A549 (cell line): ENCODE measurements at regions of chr1 and their contacts with region 1.

Region 1: GRCh38 chr1:26677306-26678115 is 18.3 kb upstream of the ARID1A start:
- DNase-seq: peak; percentile 81 to 92
- ATAC-seq: peak; percentile 100
- H3K4me3 ChIP-seq: no peak overlapping the region
- H3K27ac ChIP-seq: peak overlapping the region; percentile 53 to 66
- H3K4me1 ChIP-seq: peaks cover 9% of the 10 kb centered on the region; the same call in 2 of the 3 replicates
- CTCF ChIP-seq: peak; percentile 75
- EP300 ChIP-seq: no peak
- POLR2A ChIP-seq: no peak
- RAD21 ChIP-seq: peak in 1 of 2 experiments; percentile 73

Region 2: GRCh38 chr1:26574719-26575251 is 102.7 kb before region 1 on chr1:
- CTCF ChIA-PET with region 1: no interaction called
- POLR2A ChIA-PET with region 1: no interaction called
- DNase-seq: no peak
- ATAC-seq: no peak
- H3K4me3 ChIP-seq: no peak overlapping the region
- H3K27ac ChIP-seq: no peak overlapping the region
- H3K4me1 ChIP-seq: no peaks in the 10 kb centered on the region
- CTCF ChIP-seq: no peak
- EP300 ChIP-seq: no peak
- POLR2A ChIP-seq: no peak
- RAD21 ChIP-seq: no peak

Region 3: GRCh38 chr1:26608895-26609294 is 68.6 kb before region 1 on chr1:
- CTCF ChIA-PET with region 1: interaction called, 39 read pairs
- POLR2A ChIA-PET with region 1: no interaction called
- DNase-seq: no peak
- ATAC-seq: no peak
- H3K4me3 ChIP-seq: no peak overlapping the region
- H3K27ac ChIP-seq: no peak overlapping the region
- H3K4me1 ChIP-seq: no peaks in the 10 kb centered on the region
- CTCF ChIP-seq: no peak
- EP300 ChIP-seq: no peak
- POLR2A ChIP-seq: no peak
- RAD21 ChIP-seq: no peak

Region 4: GRCh38 chr1:26666855-26667254 is 10.7 kb before region 1 on chr1:
- CTCF ChIA-PET with region 1: interaction called, 19 read pairs
- POLR2A ChIA-PET with region 1: no interaction called
- DNase-seq: no peak
- ATAC-seq: no peak
- H3K4me3 ChIP-seq: no peak overlapping the region
- H3K27ac ChIP-seq: no peak overlapping the region
- H3K4me1 ChIP-seq: no peaks in the 10 kb centered on the region
- CTCF ChIP-seq: no peak
- EP300 ChIP-seq: no peak
- POLR2A ChIP-seq: no peak
- RAD21 ChIP-seq: no peak

Region 5: DNA sequence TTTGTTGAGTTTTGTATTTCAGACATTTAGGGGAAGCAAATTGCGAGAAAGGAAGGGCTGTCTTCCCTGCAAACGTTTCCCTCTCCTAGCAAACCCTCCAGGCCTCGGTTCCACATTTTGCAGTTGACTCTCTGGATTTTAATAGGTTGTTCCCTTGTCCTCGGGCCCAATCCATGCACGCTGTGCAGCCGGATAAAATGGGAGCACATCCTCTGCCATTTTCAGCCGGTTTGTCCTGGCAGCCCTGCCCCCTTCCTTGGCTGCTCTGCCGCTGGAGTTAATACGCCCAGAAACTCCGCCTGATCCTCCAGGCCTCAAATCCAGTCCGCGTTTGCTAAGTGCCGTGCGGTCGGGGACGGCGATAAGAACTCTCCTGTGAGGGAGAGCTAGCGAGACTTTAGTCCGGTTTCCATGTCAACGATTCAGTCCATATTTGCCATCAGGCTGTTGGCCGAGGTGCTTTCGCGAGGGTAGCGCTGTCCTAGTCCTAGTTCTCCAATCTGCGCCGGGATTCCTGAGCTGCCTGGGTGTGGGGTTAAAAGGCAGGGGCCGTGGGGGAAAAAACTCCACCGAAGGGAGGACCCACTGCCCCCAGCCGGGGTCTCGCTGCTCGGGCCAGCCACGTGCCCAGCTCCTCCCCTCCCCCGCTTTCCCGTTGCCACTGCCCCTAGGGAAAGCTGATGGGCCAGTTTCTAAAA is 15.4 kb after region 1 on chr1:
- CTCF ChIA-PET with region 1: interaction called, 51 read pairs
- POLR2A ChIA-PET with region 1: interaction called, 14 read pairs
- DNase-seq: peak; percentile 90 to 98
- ATAC-seq: peak; percentile 77 to 78
- H3K4me3 ChIP-seq: peak overlapping the region; percentile 47
- H3K27ac ChIP-seq: peak overlapping the region; percentile 100
- H3K4me1 ChIP-seq: peaks cover 24% of the 10 kb centered on the region
- CTCF ChIP-seq: no peak
- EP300 ChIP-seq: no peak; a peak in 1 of 5 replicates
- POLR2A ChIP-seq: peak; percentile 41; the same call in 1 of the 2 replicates
- RAD21 ChIP-seq: 0 out of 5 replicates have a peak, but pooled peaks have one; percentile 8 to 14

Region 6: DNA sequence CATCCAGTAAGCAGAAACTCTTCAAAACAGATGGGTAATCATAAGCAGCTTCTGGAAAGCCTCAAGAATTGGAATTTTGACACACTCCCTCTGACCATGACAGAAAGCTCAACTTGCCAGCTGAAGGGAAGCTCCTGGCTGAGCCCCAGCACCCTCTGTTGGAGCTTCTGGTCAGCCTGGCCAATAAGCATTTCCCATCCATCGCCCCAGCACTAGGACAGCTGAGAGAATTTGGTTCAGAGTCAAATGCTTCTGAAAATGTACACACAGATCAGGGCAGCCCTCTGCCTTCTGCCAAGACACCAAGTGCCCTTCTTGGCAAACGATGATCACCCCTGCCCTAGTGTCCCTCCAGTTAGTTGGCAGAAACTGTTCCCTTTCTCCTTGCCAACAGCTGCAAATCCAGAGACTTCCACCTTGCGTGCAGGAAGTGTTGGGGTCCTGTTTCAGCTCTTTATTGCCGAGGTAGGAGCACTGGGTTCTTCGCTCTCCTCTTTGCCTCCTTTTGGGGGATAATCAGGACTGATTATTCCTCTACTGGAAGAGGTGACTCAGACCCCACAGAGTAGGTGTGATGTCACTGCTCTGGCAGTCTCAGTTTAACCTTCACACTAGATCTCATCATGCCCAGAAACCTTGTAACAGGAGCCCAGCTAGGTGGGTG is 122.1 kb after region 1 on chr1:
- CTCF ChIA-PET with region 1: interaction called, 11 read pairs
- POLR2A ChIA-PET with region 1: no interaction called
- DNase-seq: no peak
- ATAC-seq: peak; percentile 73 to 76
- H3K4me3 ChIP-seq: no peak overlapping the region
- H3K27ac ChIP-seq: peak overlapping the region; percentile 40 to 57; a peak in 5 of 6 replicates
- H3K4me1 ChIP-seq: peaks cover 14% of the 10 kb centered on the region
- CTCF ChIP-seq: no peak
- EP300 ChIP-seq: no peak
- POLR2A ChIP-seq: no peak
- RAD21 ChIP-seq: no peak